Common myeloid progenitor, CD34-positive (primary cell): ENCODE measurements at regions of chr6 and their contacts with region 1.

Region 1: GRCh38 chr6:44074439-44075136 is 52.7 kb downstream of the MRPL14 start:
- DNase-seq: peak; percentile 74 to 85 (median 80)
- H3K4me3 ChIP-seq: peak overlapping the region in 1 of 7 experiments; percentile 61
- H3K27ac ChIP-seq: peak overlapping the region in 1 of 2 experiments; percentile 73
- H3K4me1 ChIP-seq: peaks cover 3 to 31% (median 25%) of the 10 kb centered on the region in 4 experiments
- H3K27me3 ChIP-seq: peaks cover 0 to 43% (median 17%) of the 10 kb centered on the region in 5 experiments

Region 2: DNA sequence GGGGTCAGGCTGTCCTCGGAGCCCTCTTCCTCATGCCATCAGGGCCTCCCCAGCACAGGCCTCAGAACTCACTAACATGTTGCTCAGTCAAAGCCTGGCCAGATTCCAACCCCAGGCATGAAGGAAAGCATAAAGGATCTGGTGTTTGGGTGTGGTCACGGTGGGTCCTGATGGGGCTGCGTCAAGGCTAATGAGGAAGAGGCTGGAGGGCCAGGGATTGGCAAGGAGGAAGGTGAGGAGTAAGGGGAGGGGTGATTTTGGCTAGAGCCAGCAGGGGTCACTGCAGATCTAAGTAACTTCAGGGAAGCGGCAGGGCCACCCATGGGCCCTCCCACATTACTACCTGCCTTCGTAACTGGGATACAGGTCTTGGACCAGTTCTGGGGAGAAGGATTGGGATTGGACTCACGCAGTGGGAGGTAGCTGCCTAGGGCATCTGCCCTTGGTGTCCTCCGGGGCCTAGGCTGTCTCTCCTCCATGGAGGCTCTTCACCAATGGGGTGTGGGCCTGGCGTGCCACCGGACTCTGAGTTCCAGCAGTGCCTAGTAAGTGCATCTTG is 350.8 kb before region 1 on chr6:
- CTCF ChIA-PET with region 1: interaction called, 24 read pairs
- POLR2A ChIA-PET with region 1: no interaction called
- DNase-seq: peak; percentile 79 to 87 (median 81)
- H3K4me3 ChIP-seq: no peak overlapping the region
- H3K27ac ChIP-seq: no peak overlapping the region
- H3K4me1 ChIP-seq: peaks cover 4 to 29% (median 27%) of the 10 kb centered on the region in 4 experiments
- H3K27me3 ChIP-seq: peaks cover 0 to 7% (median 0%) of the 10 kb centered on the region in 5 experiments

Region 3: DNA sequence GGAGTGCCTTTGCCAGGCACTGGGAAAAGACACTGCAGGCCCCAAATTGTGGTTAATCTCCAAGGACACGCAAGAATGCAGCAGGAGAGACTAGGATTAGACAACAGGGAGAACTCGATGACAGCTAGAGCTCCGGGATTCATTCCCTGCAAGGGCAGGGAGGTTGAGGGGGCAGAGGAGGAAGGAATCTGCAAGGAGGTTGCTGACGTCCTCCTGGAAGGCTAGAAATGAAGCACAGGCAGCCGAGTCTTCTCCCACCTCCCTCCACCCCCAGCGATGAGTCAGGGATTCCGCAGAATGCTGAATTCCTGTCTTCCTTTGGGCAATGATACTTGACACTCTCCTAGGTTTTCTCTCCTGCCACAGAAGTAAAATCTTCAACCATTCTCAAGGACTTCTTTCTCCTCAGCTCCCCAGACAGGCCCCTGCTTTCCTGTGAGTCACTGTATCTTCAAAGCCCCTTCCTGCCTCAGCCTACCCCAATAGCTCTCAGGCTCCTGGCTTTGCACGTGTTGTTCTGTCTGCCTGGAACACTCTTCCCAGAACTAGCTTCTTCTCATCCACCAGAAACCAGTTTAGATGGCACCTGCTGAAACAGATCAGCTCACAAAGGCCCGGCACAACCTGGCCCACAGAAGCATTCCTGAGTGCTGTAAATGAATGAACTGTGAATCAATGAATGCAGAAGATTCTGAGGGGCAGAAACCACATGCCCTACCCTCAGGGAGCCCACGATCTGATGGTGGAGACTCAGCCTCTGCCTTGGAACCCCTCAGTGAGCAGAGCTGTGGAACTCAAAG is 32.9 kb before region 1 on chr6:
- CTCF ChIA-PET with region 1: interaction called, 19 read pairs
- POLR2A ChIA-PET with region 1: no interaction called
- DNase-seq: peak in 2 of 3 donors; percentile 40 to 49
- H3K4me3 ChIP-seq: no peak overlapping the region
- H3K27ac ChIP-seq: peak overlapping the region in 1 of 2 experiments; percentile 67
- H3K4me1 ChIP-seq: peaks cover 0 to 22% (median 10%) of the 10 kb centered on the region in 4 experiments
- H3K27me3 ChIP-seq: no peaks in the 10 kb centered on the region

Region 4: DNA sequence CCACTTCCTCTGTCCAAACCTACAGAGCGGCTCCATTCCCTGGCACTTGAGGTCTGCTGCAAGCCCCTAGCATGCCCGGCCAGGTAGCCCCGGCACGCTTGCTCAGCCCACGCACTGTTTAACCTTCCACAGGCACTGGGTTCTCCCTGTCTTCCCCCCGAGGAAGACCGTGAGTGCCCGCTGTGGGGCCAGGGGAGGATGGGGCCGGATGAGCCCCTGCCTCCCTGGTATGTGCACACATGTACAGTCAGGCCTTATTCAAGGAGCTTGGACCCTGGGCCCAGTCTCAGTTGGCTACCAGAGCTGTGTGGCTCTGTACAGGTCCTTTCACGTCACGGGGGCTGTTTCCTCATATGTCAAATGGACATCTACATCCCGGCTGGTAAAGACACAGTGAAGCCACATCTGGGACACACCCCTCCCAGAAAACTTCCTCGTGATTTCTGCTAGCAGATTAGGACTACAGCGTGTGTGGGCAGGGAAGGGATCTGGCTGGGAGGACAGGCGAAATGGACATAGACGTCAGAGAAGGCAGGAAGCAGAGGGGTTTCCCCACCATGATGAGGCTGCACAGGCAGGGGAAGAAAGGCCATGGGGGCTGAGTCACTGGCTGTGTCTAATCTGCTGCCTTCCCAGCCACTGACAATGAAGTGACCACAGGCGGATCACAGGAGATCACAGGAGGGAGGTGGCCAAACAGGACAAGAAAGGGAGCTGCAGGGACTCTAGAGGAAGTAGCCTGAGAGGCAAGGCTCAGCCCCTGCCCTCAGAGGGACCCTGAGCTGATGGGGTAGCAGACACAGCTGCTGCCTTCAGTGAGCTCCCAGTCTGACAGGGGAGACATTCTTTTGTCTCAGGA is 10.3 kb before region 1 on chr6:
- CTCF ChIA-PET with region 1: interaction called, 48 read pairs
- POLR2A ChIA-PET with region 1: interaction called, 3 read pairs
- DNase-seq: peak; percentile 55 to 90 (median 88)
- H3K4me3 ChIP-seq: no peak overlapping the region
- H3K27ac ChIP-seq: peak overlapping the region in 1 of 2 experiments; percentile 54
- H3K4me1 ChIP-seq: peaks cover 0 to 22% (median 5%) of the 10 kb centered on the region in 4 experiments
- H3K27me3 ChIP-seq: peaks cover 0 to 5% (median 0%) of the 10 kb centered on the region in 5 experiments

Region 5: GRCh38 chr6:44086931-44087574 is 12.5 kb after region 1 on chr6:
- CTCF ChIA-PET with region 1: interaction called, 11 read pairs
- POLR2A ChIA-PET with region 1: no interaction called
- DNase-seq: no peak
- H3K4me3 ChIP-seq: no peak overlapping the region
- H3K27ac ChIP-seq: no peak overlapping the region
- H3K4me1 ChIP-seq: no peaks in the 10 kb centered on the region
- H3K27me3 ChIP-seq: no peaks in the 10 kb centered on the region